ENCODE measurements at regions of chr19 and their contacts with region 1.

Region 1: DNA sequence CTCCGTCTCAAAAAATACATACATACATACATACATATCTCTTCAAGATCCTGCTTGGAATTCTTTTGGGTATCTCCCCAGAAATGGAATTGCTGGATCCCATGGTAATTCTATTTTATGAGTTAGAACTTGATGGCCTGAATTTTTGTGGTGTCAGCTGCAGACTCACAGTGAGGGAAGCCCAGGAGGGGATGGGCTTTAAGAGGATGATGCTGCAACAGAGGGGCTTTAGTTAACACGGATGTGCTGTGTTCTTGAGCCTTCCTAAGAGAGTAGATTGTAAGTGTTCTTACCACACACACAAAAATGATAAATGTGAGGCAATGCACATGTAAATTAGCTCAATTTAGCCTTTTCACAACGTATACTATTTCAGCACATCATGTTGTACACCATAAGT is 31.8 kb downstream of the CACNG6 start:
- DNase-seq: no peak
- ATAC-seq: no peak
- H3K4me3 ChIP-seq: no peak overlapping the region
- H3K4me3 Mint-ChIP-seq: no peak overlapping the region
- H3K27ac ChIP-seq: no peak overlapping the region
- H3K27ac Mint-ChIP-seq: no peak overlapping the region
- H3K4me1 ChIP-seq: peaks cover 0 to 5% of the 10 kb centered on the region in 2 donors
- H3K4me1 Mint-ChIP-seq: peaks cover 3% of the 10 kb centered on the region
- H3K27me3 ChIP-seq: peaks cover 0 to 10% (median 1%) of the 10 kb centered on the region in 4 experiments
- H3K27me3 Mint-ChIP-seq: peaks cover 21% of the 10 kb centered on the region
- CTCF ChIP-seq: no peak

Region 2: GRCh38 chr19:53772943-53773342 is 250.2 kb before region 1 on chr19:
- CTCF ChIA-PET with region 1: interaction called, 3 read pairs
- POLR2A ChIA-PET with region 1: no interaction called
- intact Hi-C with region 1: loop called (anchors 2 kb)
- DNase-seq: peak; percentile 62
- ATAC-seq: peak; percentile 31
- H3K4me3 ChIP-seq: no peak overlapping the region
- H3K4me3 Mint-ChIP-seq: no peak overlapping the region
- H3K27ac ChIP-seq: no peak overlapping the region
- H3K27ac Mint-ChIP-seq: no peak overlapping the region
- H3K4me1 ChIP-seq: no peaks in the 10 kb centered on the region
- H3K4me1 Mint-ChIP-seq: peaks cover 2% of the 10 kb centered on the region
- H3K27me3 ChIP-seq: no peaks in the 10 kb centered on the region
- H3K27me3 Mint-ChIP-seq: peaks cover 4% of the 10 kb centered on the region
- CTCF ChIP-seq: peak; percentile 84

Region 3: DNA sequence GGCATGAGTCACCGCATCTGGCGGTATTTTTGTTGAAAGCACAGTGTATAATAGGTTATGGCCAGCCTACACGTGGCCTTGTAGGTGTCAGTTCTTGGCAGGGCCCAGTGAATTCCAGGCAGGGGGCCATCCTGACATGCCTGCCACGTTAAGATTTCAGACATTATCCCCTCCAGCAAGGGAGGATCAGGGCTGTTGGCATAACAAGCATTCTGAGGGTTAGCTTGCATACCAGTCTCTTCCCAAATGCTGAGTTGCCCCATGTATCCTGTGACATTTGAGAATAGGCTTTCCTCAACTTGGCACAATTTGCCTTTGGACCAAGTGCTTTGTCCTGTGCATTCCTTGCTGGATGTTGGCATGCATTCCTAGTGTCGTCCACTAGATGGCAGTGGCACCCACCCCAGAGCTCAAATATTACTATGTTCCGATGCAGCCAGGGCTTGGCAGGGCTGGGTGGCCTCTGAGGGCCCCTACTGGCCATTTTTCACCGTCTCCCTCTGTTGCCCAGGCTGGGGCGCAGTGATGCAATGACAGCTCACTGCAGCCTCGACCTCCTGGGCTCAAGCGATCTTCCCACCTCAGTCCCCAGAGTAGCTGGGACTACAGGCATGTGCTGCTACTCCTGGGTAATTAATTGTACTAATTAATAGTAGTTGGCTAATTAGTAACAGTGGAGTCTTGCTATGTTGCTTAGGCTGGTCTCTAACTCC is 230.3 kb before region 1 on chr19:
- CTCF ChIA-PET with region 1: interaction called, 46 read pairs
- POLR2A ChIA-PET with region 1: no interaction called
- intact Hi-C with region 1: no loop called
- DNase-seq: peak; percentile 79
- ATAC-seq: peak; percentile 98
- H3K4me3 ChIP-seq: no peak overlapping the region
- H3K4me3 Mint-ChIP-seq: no peak overlapping the region
- H3K27ac ChIP-seq: no peak overlapping the region
- H3K27ac Mint-ChIP-seq: no peak overlapping the region
- H3K4me1 ChIP-seq: no peaks in the 10 kb centered on the region
- H3K4me1 Mint-ChIP-seq: no peaks in the 10 kb centered on the region
- H3K27me3 ChIP-seq: no peaks in the 10 kb centered on the region
- H3K27me3 Mint-ChIP-seq: no peaks in the 10 kb centered on the region
- CTCF ChIP-seq: peak; percentile 95

Region 4: GRCh38 chr19:53849237-53849676 is 173.9 kb before region 1 on chr19:
- CTCF ChIA-PET with region 1: interaction called, 36 read pairs
- POLR2A ChIA-PET with region 1: no interaction called
- intact Hi-C with region 1: no loop called
- DNase-seq: no peak
- ATAC-seq: no peak
- H3K4me3 ChIP-seq: no peak overlapping the region
- H3K4me3 Mint-ChIP-seq: no peak overlapping the region
- H3K27ac ChIP-seq: no peak overlapping the region
- H3K27ac Mint-ChIP-seq: no peak overlapping the region
- H3K4me1 ChIP-seq: peaks cover 12 to 23% of the 10 kb centered on the region in 2 donors
- H3K4me1 Mint-ChIP-seq: peaks cover 11% of the 10 kb centered on the region
- H3K27me3 ChIP-seq: peaks cover 0 to 29% (median 12%) of the 10 kb centered on the region in 4 experiments
- H3K27me3 Mint-ChIP-seq: peaks cover 32% of the 10 kb centered on the region
- CTCF ChIP-seq: no peak

Region 5: DNA sequence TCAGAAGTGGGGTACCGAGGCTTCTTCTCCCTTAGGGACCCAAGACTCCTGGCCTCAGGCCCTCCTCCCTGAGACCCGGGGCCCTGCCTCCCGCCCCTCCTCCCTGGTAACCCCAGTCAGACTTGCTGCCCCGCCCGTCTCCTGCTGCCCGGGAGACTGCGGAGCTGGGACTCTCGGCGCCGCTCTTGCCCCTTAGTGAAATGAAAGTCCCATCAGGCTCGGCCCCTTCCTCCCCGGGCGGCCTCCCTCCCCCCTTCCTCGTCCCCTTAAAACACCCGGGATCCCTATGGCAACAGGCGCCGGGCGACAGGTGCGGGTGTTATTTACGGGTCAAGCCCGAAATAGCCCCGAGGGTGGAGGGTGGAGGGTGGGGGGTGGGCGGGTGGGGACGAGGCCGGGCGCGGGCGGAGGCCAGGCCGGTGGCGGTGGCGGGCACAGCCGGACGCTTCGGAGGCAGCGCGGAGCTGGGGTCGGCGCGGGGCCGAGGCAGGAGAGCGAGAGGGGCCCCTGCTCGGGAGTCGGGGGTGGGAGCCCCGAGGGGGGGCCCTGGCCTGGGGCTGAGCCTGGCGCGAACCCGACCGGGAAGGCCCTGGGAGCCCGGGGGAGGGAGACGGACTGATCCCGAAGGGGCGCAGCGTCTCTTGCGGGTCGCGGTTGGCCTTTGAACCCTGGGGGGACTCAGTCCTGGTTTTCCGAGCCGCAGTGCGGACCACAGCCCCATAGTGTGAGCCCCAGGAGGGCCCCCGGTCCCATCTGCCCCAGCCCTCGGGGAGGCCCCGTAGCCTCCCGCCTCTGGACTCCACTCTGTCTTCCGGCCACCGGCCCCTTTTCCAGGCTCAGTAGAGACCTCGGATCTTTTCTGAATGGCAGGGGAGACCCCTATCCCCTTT is 31.7 kb before region 1 on chr19 and contains the start of gene CACNG6:
- CTCF ChIA-PET with region 1: no interaction called
- POLR2A ChIA-PET with region 1: no interaction called
- intact Hi-C with region 1: no loop called
- DNase-seq: no peak
- ATAC-seq: no peak
- H3K4me3 ChIP-seq: no peak within 1 kb of the TSS
- H3K4me3 Mint-ChIP-seq: peak within 1 kb of the TSS; percentile 34
- H3K27ac ChIP-seq: no peak within 1 kb of the TSS
- H3K27ac Mint-ChIP-seq: no peak within 1 kb of the TSS
- H3K4me1 ChIP-seq: peaks cover 4% of the 10 kb centered on the region in 2 donors
- H3K4me1 Mint-ChIP-seq: peaks cover 3% of the 10 kb centered on the region
- H3K27me3 ChIP-seq: peaks cover 0 to 28% (median 6%) of the 10 kb centered on the region in 4 experiments
- H3K27me3 Mint-ChIP-seq: peaks cover 42% of the 10 kb centered on the region
- CTCF ChIP-seq: no peak
- total RNA-seq, gene CACNG6: not detected in 2 replicates

Region 6: DNA sequence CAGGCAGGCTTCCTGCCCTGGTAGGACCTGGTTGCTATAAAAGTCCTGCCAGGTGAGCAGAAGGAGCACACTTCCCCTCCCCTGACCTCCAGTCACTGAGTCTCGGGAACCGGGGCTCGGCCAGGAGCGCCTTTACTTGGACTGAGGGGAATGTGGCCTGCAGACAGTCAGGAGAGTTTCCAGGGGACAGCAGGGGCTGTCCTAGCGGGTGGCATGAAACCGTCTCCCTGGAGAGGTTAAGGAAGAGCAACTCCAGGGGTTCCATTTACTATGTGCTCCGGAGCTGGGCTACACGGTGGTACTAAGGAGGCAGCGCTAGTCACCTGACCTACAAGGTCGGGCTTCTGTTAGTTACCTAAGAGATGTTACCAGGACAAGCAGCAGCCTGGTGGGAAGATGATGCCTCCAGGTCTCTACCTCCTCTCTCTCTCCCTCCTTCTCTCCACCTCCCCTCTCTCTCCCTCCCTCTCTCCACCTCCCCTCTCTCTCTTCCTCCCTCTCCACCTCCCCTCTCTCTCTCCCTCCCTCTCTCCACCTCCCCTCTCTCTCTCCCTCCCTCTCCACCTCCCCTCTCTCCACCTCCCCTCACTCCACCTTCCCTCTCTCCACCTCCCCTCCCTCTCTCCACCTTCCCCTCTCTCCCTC is 110.2 kb after region 1 on chr19:
- CTCF ChIA-PET with region 1: no interaction called
- POLR2A ChIA-PET with region 1: no interaction called
- intact Hi-C with region 1: no loop called
- DNase-seq: peak; percentile 74
- ATAC-seq: no peak
- H3K4me3 ChIP-seq: no peak overlapping the region
- H3K4me3 Mint-ChIP-seq: no peak overlapping the region
- H3K27ac ChIP-seq: no peak overlapping the region
- H3K27ac Mint-ChIP-seq: no peak overlapping the region
- H3K4me1 ChIP-seq: peaks cover 9 to 13% of the 10 kb centered on the region in 2 donors
- H3K4me1 Mint-ChIP-seq: peaks cover 16% of the 10 kb centered on the region
- H3K27me3 ChIP-seq: peaks cover 0 to 13% (median 2%) of the 10 kb centered on the region in 4 experiments
- H3K27me3 Mint-ChIP-seq: peaks cover 4% of the 10 kb centered on the region
- CTCF ChIP-seq: no peak